ENCODE measurements at regions of chr1 and their contacts with region 1.

Region 1: DNA sequence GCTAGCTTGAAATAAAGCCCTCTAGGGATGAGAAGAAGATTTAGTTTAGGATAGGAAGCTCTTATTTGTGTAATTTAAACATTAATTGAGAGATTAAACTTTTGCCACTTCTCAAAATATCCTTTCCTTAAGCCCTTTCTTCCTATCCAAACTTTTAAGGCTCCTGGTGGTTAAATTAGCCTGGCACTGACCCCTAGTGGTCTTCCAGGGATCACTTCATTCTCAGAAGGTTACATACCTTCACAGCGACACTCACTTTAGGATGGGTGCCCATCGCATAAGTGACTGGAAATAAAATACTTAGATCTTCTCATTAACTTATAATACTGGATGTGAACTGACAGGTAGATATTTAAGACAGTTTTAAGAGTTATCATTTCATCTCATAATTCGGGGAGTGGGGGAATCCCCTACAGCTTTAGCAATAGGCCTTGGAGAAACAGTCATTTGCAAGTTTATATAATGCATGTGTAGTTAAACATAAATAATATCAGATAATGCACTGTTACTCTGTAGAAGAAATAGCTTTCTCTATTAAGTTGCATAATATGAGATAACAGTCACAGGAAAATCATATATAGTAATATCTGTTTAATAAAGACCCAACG is 7.4 kb downstream of the LHX9 start:
- DNase-seq: peak in 3 of 5 donors; percentile 33 to 59 (median 45)
- H3K4me3 ChIP-seq: no peak overlapping the region
- H3K27ac ChIP-seq: no peak overlapping the region
- H3K4me1 ChIP-seq: peaks cover 3% of the 10 kb centered on the region
- H3K27me3 ChIP-seq: no peaks in the 10 kb centered on the region
- CTCF ChIP-seq: peak; percentile 47 to 64 (median 48)
- EP300 ChIP-seq: no peak
- POLR2A ChIP-seq: no peak

Region 2: GRCh38 chr1:197180252-197180878 is 744.3 kb before region 1 on chr1:
- intact Hi-C with region 1: loop called in 1 of 4 experiments (anchors 10 kb)
- DNase-seq: no peak
- H3K4me3 ChIP-seq: no peak overlapping the region
- H3K27ac ChIP-seq: no peak overlapping the region
- H3K4me1 ChIP-seq: no peaks in the 10 kb centered on the region
- H3K27me3 ChIP-seq: no peaks in the 10 kb centered on the region
- CTCF ChIP-seq: peak in 2 of 3 donors; percentile 22 to 37
- EP300 ChIP-seq: no peak
- POLR2A ChIP-seq: no peak